ENCODE measurements at regions of chr3 and their contacts with region 1.

Region 1: GRCh38 chr3:192802957-192803899 is 75.9 kb upstream of the FGF12 start:
- DNase-seq: no peak
- H3K4me3 ChIP-seq: no peak overlapping the region
- H3K27ac ChIP-seq: no peak overlapping the region
- H3K4me1 ChIP-seq: peaks cover 3 to 12% (median 7%) of the 10 kb centered on the region in 4 donors
- H3K27me3 ChIP-seq: no peaks in the 10 kb centered on the region
- CTCF ChIP-seq: peak; percentile 24 to 53 (median 46)
- EP300 ChIP-seq: no peak
- POLR2A ChIP-seq: no peak

Region 2: GRCh38 chr3:192467230-192468140 is 335.7 kb before region 1 on chr3:
- intact Hi-C with region 1: loop called (anchors 5 kb)
- DNase-seq: no peak
- H3K4me3 ChIP-seq: no peak overlapping the region
- H3K27ac ChIP-seq: no peak overlapping the region
- H3K4me1 ChIP-seq: peaks cover 0 to 5% (median 2%) of the 10 kb centered on the region in 4 donors
- H3K27me3 ChIP-seq: peaks cover 0 to 6% (median 0%) of the 10 kb centered on the region in 4 donors
- CTCF ChIP-seq: peak; percentile 80 to 94 (median 91)
- EP300 ChIP-seq: no peak
- POLR2A ChIP-seq: no peak

Region 3: GRCh38 chr3:192566706-192567290 is 236.4 kb before region 1 on chr3:
- intact Hi-C with region 1: loop called (anchors 2 kb)
- DNase-seq: no peak
- H3K4me3 ChIP-seq: no peak overlapping the region
- H3K27ac ChIP-seq: no peak overlapping the region
- H3K4me1 ChIP-seq: peaks cover 0 to 8% (median 1%) of the 10 kb centered on the region in 4 donors
- H3K27me3 ChIP-seq: no peaks in the 10 kb centered on the region
- CTCF ChIP-seq: peak; percentile 66 to 74 (median 73)
- EP300 ChIP-seq: no peak
- POLR2A ChIP-seq: no peak

Region 4: GRCh38 chr3:192831111-192831644 is 27.9 kb after region 1 on chr3:
- intact Hi-C with region 1: no loop called
- DNase-seq: no peak
- H3K4me3 ChIP-seq: no peak overlapping the region
- H3K27ac ChIP-seq: no peak overlapping the region
- H3K4me1 ChIP-seq: peaks cover 17 to 54% (median 48%) of the 10 kb centered on the region in 4 donors
- H3K27me3 ChIP-seq: no peaks in the 10 kb centered on the region
- CTCF ChIP-seq: no peak
- EP300 ChIP-seq: no peak
- POLR2A ChIP-seq: no peak

Region 5: DNA sequence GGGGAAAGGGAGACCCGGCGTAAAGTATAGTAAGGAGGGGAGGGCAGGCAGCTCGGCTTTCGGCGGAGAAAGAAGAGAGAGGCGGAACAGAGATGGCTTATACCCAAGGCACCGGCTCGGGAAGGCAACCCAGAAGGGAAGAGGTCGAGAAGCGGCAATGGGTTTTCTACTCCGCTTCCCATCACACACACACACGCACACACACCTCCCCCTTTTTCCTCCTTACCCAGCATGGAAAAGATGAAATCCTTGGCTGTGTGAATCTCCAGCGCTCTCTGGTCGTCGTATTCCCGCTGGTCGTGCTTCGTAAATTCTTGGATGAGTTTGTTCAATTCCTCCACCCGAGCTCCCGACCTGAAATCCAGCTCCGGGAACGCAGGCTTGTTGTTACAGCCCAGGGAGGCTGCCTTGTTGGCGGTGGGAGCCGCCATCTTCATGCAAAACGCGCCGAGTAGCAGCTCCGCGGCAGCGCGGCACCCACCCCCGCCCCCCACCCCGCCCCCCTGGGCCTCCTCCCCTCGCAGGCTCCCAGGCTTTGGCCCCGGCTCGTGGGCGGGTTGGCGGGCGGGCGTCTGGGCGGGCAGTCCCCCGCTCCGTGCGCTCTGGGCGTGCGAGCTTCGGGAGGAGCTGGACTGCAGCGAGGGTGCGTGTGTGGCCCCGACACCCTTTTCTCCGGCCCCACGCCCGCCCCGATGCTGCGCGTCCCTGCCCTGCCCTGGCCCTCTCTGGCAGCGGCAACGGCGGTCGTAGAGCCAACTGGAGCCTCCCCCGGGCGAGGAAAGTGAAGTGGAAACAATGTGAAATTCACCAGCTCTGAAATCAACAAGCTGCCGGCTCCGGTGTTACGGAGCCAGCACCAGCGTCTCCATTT is 114.4 kb after region 1 on chr3 and contains the start of gene MB21D2:
- intact Hi-C with region 1: no loop called
- DNase-seq: peak; percentile 93
- H3K4me3 ChIP-seq: peak within 1 kb of the TSS; percentile 80 to 86 (median 84)
- H3K27ac ChIP-seq: peak within 1 kb of the TSS; percentile 91 to 96 (median 94)
- H3K4me1 ChIP-seq: peaks cover 27 to 61% (median 50%) of the 10 kb centered on the region in 4 donors
- H3K27me3 ChIP-seq: no peaks in the 10 kb centered on the region
- CTCF ChIP-seq: peak in 2 of 3 experiments; percentile 4 to 8
- EP300 ChIP-seq: no peak
- POLR2A ChIP-seq: no peak
- total RNA-seq, gene MB21D2: 5.4 to 11.5 (median 8.2) TPM

Measured in esophagus muscularis mucosa (tissue), 4 donors.